ENCODE measurements at regions of chr6 and their contacts with region 1.

Region 1: DNA sequence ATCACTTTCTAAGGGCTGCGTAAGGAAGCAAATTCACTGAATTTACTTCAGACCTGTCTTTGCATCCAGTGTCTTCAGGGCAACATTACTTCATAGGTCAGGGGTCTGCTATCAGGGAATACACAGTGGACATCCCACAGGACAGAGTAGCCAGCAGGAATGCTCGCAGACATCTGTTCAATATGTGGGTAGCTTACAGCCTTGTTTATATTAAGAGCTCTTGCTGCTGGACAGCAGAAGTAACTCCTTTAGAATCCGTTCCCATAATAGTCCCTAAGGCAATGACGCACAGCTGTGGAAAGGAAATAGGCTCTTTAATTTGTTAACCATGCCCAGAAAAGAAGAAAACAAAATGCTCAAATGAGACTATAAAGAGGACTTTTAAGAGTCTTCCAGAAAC is 198.7 kb downstream of the MOXD1 start:
- DNase-seq: peak in 1 of 2 donors; percentile 65
- ATAC-seq: peak in 7 of 8 donors; percentile 88 to 96 (median 93)
- H3K4me3 ChIP-seq: no peak overlapping the region
- H3K27ac ChIP-seq: peak overlapping the region in 9 of 10 donors; percentile 51 to 89 (median 75)
- H3K4me1 ChIP-seq: peaks cover 0 to 23% (median 13%) of the 10 kb centered on the region in 9 donors
- H3K27me3 ChIP-seq: no peaks in the 10 kb centered on the region
- CTCF ChIP-seq: no peak

Region 2: GRCh38 chr6:131683479-131683878 is 519.1 kb before region 1 on chr6:
- intact Hi-C with region 1: loop called in 1 of 10 experiments (anchors 10 kb)
- DNase-seq: no peak
- ATAC-seq: no peak
- H3K4me3 ChIP-seq: no peak overlapping the region
- H3K27ac ChIP-seq: no peak overlapping the region
- H3K4me1 ChIP-seq: no peaks in the 10 kb centered on the region
- H3K27me3 ChIP-seq: no peaks in the 10 kb centered on the region
- CTCF ChIP-seq: no peak

Region 3: DNA sequence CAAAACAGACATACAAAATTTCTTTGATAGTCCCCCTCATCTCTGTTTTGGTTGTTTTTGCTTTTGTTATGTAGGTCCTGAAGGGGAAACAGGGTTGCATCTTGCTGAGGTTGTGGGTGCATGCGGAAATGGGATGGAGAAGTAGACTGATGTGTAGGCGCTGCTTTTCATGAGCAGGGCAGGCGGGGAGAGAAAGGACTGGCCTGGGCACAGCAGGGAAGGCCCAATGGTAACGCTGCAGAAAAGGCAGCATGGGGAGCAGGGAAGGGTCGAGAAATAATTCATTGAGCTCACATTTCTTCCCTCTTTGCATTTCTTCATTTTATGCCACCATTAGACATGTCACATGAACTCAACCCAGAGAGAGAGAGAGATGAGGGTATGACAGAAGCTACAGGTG is 177.1 kb before region 1 on chr6:
- intact Hi-C with region 1: loop called in 1 of 10 experiments (anchors 5 kb)
- DNase-seq: no peak
- ATAC-seq: no peak
- H3K4me3 ChIP-seq: no peak overlapping the region
- H3K27ac ChIP-seq: no peak overlapping the region
- H3K4me1 ChIP-seq: peaks cover 0 to 4% (median 0%) of the 10 kb centered on the region in 9 donors
- H3K27me3 ChIP-seq: no peaks in the 10 kb centered on the region
- CTCF ChIP-seq: no peak

Region 4: GRCh38 chr6:132320007-132320406 is 117.4 kb after region 1 on chr6:
- intact Hi-C with region 1: no loop called
- DNase-seq: no peak
- ATAC-seq: no peak
- H3K4me3 ChIP-seq: no peak overlapping the region
- H3K27ac ChIP-seq: no peak overlapping the region
- H3K4me1 ChIP-seq: peaks cover 0 to 3% (median 0%) of the 10 kb centered on the region in 9 donors
- H3K27me3 ChIP-seq: no peaks in the 10 kb centered on the region
- CTCF ChIP-seq: no peak

Measured in heart right ventricle (tissue), 16 donors.